CD14-positive monocyte (primary cell): ENCODE measurements at regions of chr4 and their contacts with region 1.

Region 1: GRCh38 chr4:140851032-140851636 is 94.9 kb upstream of the TBC1D9 start:
- DNase-seq: peak; percentile 64 to 69 (median 66)
- H3K4me3 ChIP-seq: no peak overlapping the region
- H3K4me3 Mint-ChIP-seq: no peak overlapping the region
- H3K27ac ChIP-seq: no peak overlapping the region
- H3K27ac Mint-ChIP-seq: peak overlapping the region in 2 of 7 donors; percentile 0 to 1
- H3K4me1 ChIP-seq: peaks cover 4 to 5% of the 10 kb centered on the region in 2 donors
- H3K4me1 Mint-ChIP-seq: peaks cover 7% of the 10 kb centered on the region
- H3K27me3 ChIP-seq: peaks cover 0 to 2% of the 10 kb centered on the region in 2 donors
- H3K27me3 Mint-ChIP-seq: peaks cover 5 to 10% (median 10%) of the 10 kb centered on the region in 3 donors
- CTCF ChIP-seq: peak; percentile 93

Region 2: DNA sequence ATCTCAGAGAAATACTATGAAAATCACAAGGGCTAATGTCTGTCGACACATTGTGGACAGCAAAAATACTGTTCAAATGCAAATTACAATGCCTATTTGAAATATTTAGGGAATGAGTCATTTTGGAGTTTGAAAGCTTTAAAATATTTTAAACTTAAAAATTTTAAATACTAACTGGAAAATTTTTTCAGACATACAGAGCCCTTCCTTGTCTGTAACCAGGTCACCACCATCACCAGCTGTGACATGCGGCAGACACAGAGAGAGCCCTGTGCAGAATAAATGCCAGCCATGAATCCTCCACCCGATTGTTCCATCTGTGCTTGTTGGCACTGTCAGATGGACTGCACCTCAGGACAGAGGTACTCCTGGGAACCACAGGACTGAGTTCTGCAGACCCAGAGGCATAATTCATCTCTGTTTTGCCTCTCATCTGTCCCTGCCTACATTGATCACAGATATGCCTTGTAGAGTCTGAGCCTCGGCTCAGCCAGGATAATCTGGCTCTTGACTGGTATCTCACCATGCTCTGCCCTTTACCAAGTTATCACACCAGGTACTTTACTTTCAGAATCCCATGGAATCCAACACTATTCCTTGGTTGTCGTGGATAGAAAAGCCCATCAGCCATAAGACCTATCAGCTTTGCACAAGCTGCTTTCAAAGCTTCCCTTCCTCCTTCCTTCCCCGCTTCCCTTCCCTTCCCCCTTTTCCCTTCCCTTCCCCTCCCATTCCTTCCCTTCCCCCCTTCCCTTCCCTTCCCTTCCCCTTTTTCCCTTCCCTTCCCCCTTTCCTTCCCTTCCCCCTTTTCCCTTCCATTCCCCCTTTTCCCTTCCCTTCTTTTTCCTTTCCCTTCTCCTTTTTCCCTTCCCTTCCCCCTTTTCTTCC is 162.2 kb before region 1 on chr4:
- intact Hi-C with region 1: loop called in 1 of 2 experiments (anchors 10 kb)
- DNase-seq: no peak
- H3K4me3 ChIP-seq: no peak overlapping the region
- H3K4me3 Mint-ChIP-seq: no peak overlapping the region
- H3K27ac ChIP-seq: no peak overlapping the region
- H3K27ac Mint-ChIP-seq: no peak overlapping the region
- H3K4me1 ChIP-seq: no peaks in the 10 kb centered on the region
- H3K4me1 Mint-ChIP-seq: peaks cover 6% of the 10 kb centered on the region
- H3K27me3 ChIP-seq: peaks cover 0 to 3% of the 10 kb centered on the region in 2 donors
- H3K27me3 Mint-ChIP-seq: peaks cover 1 to 3% (median 2%) of the 10 kb centered on the region in 3 donors
- CTCF ChIP-seq: no peak